ENCODE measurements at regions of chr2 and their contacts with region 1.

Region 1: DNA sequence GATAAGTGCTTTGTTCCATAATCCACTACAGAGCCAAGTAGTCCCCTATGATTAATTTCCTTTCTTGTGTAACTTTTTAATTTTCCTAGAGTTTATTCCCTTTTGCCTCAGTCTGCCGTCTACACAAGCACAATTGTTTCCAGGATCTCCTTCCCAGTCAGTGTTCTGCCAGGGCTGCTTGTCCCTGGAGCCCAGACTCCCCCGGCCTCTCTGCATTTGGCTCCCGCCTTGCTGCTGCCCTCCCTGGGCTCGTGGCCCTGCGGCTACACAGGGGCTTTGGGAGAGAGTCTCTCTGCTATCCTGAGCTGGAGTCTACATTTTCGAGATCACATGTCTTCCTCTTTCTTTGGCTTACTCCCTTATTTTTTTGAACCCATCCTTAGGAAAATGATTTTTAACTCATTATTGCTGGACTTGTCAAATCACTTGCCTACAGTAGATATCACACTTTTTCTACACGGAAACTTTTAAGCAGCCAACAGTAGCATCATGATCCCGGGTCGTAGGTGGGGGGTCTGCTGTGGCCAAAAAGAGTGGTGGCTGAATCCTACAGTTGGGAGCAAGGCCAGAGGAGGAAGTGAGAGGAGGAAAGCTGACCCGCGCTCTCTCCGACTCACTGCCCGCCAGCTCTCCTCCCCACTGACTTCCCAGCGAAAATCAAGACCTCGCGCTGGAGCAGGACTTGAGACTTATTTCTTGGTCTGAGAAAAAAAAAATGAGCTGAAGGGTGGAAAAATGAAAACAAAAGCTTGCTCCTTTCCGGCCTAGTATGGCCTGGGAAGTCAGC is 9.4 kb downstream of the FBLN7 start:
- DNase-seq: peak; percentile 87

Region 2: GRCh38 chr2:112254466-112255239 is 107.1 kb after region 1 on chr2 and contains the start of gene ZC3H8:
- intact Hi-C with region 1: loop called in 1 of 2 experiments (anchors 10 kb)
- DNase-seq: peak; percentile 98
- total RNA-seq, gene ZC3H8: 6.0 to 8.1 TPM